ENCODE measurements at regions of chr3 and their contacts with region 1.

Region 1: GRCh38 chr3:112561731-112562688 is at the starts of genes ATG3 and SLC35A5:
- DNase-seq: peak; percentile 99
- ATAC-seq: peak; percentile 81
- H3K4me3 Mint-ChIP-seq: peak within 1 kb of the TSS; percentile 97
- H3K27ac Mint-ChIP-seq: peak within 1 kb of the TSS; percentile 98
- H3K4me1 Mint-ChIP-seq: peaks cover 35% of the 10 kb centered on the region
- H3K27me3 Mint-ChIP-seq: no peaks in the 10 kb centered on the region
- total RNA-seq, gene ATG3: 54.9 to 71.0 TPM
- total RNA-seq, gene SLC35A5: 16.5 to 18.7 TPM

Region 2: GRCh38 chr3:112128843-112129727 is 432.9 kb before region 1 on chr3:
- CTCF ChIA-PET with region 1: no interaction called
- POLR2A ChIA-PET with region 1: no interaction called
- intact Hi-C with region 1: loop called in 1 of 2 experiments (anchors 2 kb)
- DNase-seq: peak; percentile 75
- ATAC-seq: peak; percentile 82
- H3K4me3 Mint-ChIP-seq: peak overlapping the region; percentile 20
- H3K27ac Mint-ChIP-seq: peak overlapping the region; percentile 69
- H3K4me1 Mint-ChIP-seq: peaks cover 82% of the 10 kb centered on the region
- H3K27me3 Mint-ChIP-seq: no peaks in the 10 kb centered on the region

Region 3: GRCh38 chr3:112338021-112338726 is 223.8 kb before region 1 on chr3:
- CTCF ChIA-PET with region 1: interaction called, 3 read pairs
- POLR2A ChIA-PET with region 1: interaction called, 4 read pairs
- intact Hi-C with region 1: loop called in 1 of 2 experiments (anchors 1 kb)
- DNase-seq: no peak
- ATAC-seq: peak; percentile 80
- H3K4me3 Mint-ChIP-seq: peak overlapping the region; percentile 26
- H3K27ac Mint-ChIP-seq: peak overlapping the region; percentile 78
- H3K4me1 Mint-ChIP-seq: peaks cover 64% of the 10 kb centered on the region
- H3K27me3 Mint-ChIP-seq: no peaks in the 10 kb centered on the region

Region 4: GRCh38 chr3:112605285-112605684 is 43.3 kb after region 1 on chr3:
- CTCF ChIA-PET with region 1: interaction called, 4 read pairs
- POLR2A ChIA-PET with region 1: no interaction called
- intact Hi-C with region 1: loop called in 1 of 2 experiments (anchors 2 kb)
- DNase-seq: peak; percentile 14
- ATAC-seq: peak; percentile 75
- H3K4me3 Mint-ChIP-seq: no peak overlapping the region
- H3K27ac Mint-ChIP-seq: no peak overlapping the region
- H3K4me1 Mint-ChIP-seq: peaks cover 25% of the 10 kb centered on the region
- H3K27me3 Mint-ChIP-seq: no peaks in the 10 kb centered on the region

Region 5: GRCh38 chr3:112990672-112991602 is 428.9 kb after region 1 on chr3 and contains the start of gene GTPBP8:
- CTCF ChIA-PET with region 1: no interaction called
- POLR2A ChIA-PET with region 1: no interaction called
- intact Hi-C with region 1: loop called (anchors 5 kb)
- DNase-seq: peak; percentile 95
- ATAC-seq: peak; percentile 96
- H3K4me3 Mint-ChIP-seq: peak within 1 kb of the TSS; percentile 81
- H3K27ac Mint-ChIP-seq: peak within 1 kb of the TSS; percentile 94
- H3K4me1 Mint-ChIP-seq: peaks cover 70% of the 10 kb centered on the region
- H3K27me3 Mint-ChIP-seq: no peaks in the 10 kb centered on the region
- total RNA-seq, gene GTPBP8: 34.3 to 43.0 TPM

Region 6: GRCh38 chr3:113019182-113020137 is 457.4 kb after region 1 on chr3:
- CTCF ChIA-PET with region 1: no interaction called
- POLR2A ChIA-PET with region 1: interaction called, 7 read pairs
- intact Hi-C with region 1: loop called (anchors 1 kb)
- DNase-seq: peak; percentile 96
- ATAC-seq: peak; percentile 90
- H3K4me3 Mint-ChIP-seq: peak overlapping the region; percentile 85
- H3K27ac Mint-ChIP-seq: peak overlapping the region; percentile 94
- H3K4me1 Mint-ChIP-seq: peaks cover 55% of the 10 kb centered on the region
- H3K27me3 Mint-ChIP-seq: no peaks in the 10 kb centered on the region